ENCODE measurements at regions of chr19 and their contacts with region 1.

Region 1: GRCh38 chr19:771332-771785 is 20.4 kb downstream of the MISP start:
- DNase-seq: peak; percentile 70
- H3K4me3 Mint-ChIP-seq: no peak overlapping the region
- H3K27ac Mint-ChIP-seq: no peak overlapping the region
- H3K4me1 Mint-ChIP-seq: peaks cover 3% of the 10 kb centered on the region
- H3K27me3 Mint-ChIP-seq: peaks cover 4% of the 10 kb centered on the region

Region 2: DNA sequence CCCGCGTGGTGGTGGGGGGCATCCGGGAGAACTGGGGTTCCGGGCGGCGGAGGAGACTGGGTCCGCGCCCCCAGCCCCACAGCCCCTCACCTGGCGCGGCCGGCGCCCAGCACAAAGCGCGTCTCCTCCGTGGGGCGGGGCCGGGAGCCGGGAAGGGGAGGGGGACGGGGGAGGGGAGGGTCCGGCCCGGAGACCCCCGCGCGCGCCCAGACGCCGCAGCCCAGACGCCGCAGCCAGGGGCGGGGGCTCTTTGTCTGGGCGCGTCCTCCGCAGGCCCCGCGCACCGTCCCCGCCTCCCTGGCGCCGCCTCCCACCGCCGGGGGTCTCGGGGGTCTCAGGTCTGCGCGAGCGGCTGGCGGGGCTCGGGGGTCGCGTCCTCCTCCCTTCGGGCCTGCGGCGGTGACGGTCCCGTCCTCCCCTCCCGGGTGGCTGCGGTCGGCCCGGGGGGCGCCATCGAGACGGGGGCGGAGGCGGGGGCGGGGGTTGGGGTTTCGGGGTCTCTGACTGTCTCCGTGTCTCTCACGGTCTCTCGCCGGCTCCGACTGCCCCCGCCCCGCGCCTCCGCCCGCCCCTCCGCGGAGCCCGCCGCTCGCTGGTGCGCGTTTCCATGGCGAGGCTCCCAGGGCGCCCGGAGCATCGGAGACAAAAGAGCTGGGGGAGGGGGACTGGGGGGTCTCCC is 50.6 kb after region 1 on chr19 and contains the start of gene PLPPR3:
- intact Hi-C with region 1: loop called (anchors 10 kb)
- DNase-seq: no peak
- H3K4me3 Mint-ChIP-seq: no peak within 1 kb of the TSS
- H3K27ac Mint-ChIP-seq: no peak within 1 kb of the TSS
- H3K4me1 Mint-ChIP-seq: no peaks in the 10 kb centered on the region
- H3K27me3 Mint-ChIP-seq: peaks cover 24% of the 10 kb centered on the region
- total RNA-seq, gene PLPPR3: not detected in 2 replicates

Region 3: DNA sequence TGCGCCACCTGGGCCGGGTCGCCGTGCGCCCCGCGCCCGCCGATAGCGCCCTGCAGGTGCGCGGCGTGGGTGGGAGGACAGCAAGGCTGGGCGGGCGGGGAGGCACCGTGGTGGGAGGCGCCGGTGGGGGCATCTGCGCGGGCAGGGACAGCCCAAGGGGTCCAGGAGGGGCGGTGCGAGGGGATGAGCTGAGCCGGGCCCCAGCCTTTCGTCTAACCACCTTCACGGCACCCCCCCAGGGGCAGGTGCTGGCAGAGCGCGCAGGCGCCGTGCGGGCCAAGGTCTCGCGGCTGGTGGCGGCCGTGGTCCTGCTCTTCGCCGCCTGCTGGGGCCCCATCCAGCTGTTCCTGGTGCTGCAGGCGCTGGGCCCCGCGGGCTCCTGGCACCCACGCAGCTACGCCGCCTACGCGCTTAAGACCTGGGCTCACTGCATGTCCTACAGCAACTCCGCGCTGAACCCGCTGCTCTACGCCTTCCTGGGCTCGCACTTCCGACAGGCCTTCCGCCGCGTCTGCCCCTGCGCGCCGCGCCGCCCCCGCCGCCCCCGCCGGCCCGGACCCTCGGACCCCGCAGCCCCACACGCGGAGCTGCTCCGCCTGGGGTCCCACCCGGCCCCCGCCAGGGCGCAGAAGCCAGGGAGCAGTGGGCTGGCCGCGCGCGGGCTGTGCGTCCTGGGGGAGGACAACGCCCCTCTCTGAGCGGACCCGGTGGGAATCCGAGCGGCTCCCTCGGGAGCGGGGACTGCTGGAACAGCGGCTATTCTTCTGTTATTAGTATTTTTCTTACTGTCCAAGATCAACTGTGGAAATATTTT is 148.9 kb after region 1 on chr19:
- intact Hi-C with region 1: loop called (anchors 1 kb)
- DNase-seq: peak; percentile 90
- H3K4me3 Mint-ChIP-seq: peak overlapping the region; percentile 86
- H3K27ac Mint-ChIP-seq: peak overlapping the region; percentile 92
- H3K4me1 Mint-ChIP-seq: peaks cover 16% of the 10 kb centered on the region
- H3K27me3 Mint-ChIP-seq: peaks cover 2% of the 10 kb centered on the region

Region 4: GRCh38 chr19:1001538-1002166 is 230.3 kb after region 1 on chr19:
- intact Hi-C with region 1: loop called (anchors 1 kb)
- DNase-seq: peak; percentile 93
- H3K4me3 Mint-ChIP-seq: peak overlapping the region; percentile 44
- H3K27ac Mint-ChIP-seq: no peak overlapping the region
- H3K4me1 Mint-ChIP-seq: peaks cover 6% of the 10 kb centered on the region
- H3K27me3 Mint-ChIP-seq: peaks cover 32% of the 10 kb centered on the region

Measured in activated CD4-positive, alpha-beta T cell treated with anti-CD3 and anti-CD28 coated beads, Interleukin-2, amount 10 ng/mL, durations not matched to agents 24 days and 14 days (primary cell).